ENCODE measurements at regions of chrX and their contacts with region 1.

Region 1: DNA sequence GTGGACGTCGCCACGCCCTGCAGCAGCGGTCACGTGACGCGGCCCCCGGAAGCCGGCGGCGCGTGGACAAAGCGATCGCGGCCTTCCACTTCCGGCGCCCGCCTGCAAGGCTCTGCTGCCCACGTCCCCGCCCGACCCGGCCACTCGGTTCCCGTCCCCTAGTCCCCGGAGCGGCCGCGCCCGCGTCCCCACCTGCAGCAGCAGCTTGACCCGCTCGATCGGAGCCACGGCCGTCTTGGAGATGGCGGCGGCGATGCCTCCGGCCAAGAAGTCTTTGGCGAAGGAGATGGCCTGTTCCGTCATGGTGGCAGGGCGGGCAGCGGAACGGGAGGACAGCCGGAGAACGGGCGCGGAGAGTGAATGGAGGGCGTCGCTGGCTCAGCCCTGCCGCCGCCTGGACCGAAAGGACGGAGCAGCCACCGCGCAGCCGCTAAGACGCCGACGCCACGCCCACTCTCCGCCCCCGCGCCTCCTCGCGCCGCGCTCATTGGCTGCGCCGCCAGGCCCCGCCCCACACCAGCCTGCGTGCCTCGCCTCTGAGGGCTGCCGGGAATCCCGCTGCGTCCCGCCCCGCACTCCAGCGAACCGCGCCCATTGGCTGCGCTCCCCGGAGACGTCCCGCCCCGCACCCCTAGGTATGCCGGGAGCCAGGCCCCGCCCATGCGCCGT is at the start of gene SLC25A6:
- DNase-seq: peak; percentile 100
- H3K4me3 Mint-ChIP-seq: peak within 1 kb of the TSS; percentile 84
- H3K27ac Mint-ChIP-seq: peak within 1 kb of the TSS; percentile 96
- H3K4me1 Mint-ChIP-seq: peaks cover 57% of the 10 kb centered on the region
- H3K27me3 Mint-ChIP-seq: no peaks in the 10 kb centered on the region
- total RNA-seq, gene SLC25A6: 399 to 407 TPM

Region 2: GRCh38 chrX:318739-319578 is 1072.9 kb before region 1 on chrX and contains the start of gene GTPBP6:
- CTCF ChIA-PET with region 1: no interaction called
- POLR2A ChIA-PET with region 1: no interaction called
- intact Hi-C with region 1: loop called (anchors 2 kb)
- DNase-seq: peak; percentile 99
- H3K4me3 Mint-ChIP-seq: peak within 1 kb of the TSS; percentile 91
- H3K27ac Mint-ChIP-seq: peak within 1 kb of the TSS; percentile 99
- H3K4me1 Mint-ChIP-seq: peaks cover 23% of the 10 kb centered on the region
- H3K27me3 Mint-ChIP-seq: no peaks in the 10 kb centered on the region
- total RNA-seq, gene GTPBP6: 60.0 to 62.4 TPM

Region 3: DNA sequence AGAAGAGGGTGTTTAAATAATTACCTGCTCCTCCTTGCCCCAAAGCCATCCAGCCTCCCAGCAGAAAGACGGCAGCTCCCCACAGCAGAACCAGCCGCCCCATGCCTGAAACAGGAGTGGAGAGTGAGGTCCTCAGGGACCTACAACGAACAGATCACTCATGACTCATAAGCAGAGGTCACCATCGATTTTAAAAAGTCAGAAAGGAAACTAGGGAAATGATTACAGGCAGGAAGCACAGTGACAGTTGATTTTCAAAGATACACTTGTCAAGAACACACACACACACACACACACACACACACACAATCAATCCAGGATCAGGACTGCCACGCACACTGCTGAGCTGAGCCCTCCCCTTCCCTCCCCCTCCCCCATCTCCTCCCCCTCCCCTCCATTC is 179.3 kb before region 1 on chrX and contains the start of gene CRLF2:
- CTCF ChIA-PET with region 1: no interaction called
- POLR2A ChIA-PET with region 1: no interaction called
- intact Hi-C with region 1: loop called (anchors 2 kb)
- DNase-seq: peak; percentile 61
- H3K4me3 Mint-ChIP-seq: peak within 1 kb of the TSS; percentile 61
- H3K27ac Mint-ChIP-seq: peak within 1 kb of the TSS; percentile 81
- H3K4me1 Mint-ChIP-seq: peaks cover 37% of the 10 kb centered on the region
- H3K27me3 Mint-ChIP-seq: peaks cover 8% of the 10 kb centered on the region
- total RNA-seq, gene CRLF2: 0.44 to 1.3 TPM

Region 4: DNA sequence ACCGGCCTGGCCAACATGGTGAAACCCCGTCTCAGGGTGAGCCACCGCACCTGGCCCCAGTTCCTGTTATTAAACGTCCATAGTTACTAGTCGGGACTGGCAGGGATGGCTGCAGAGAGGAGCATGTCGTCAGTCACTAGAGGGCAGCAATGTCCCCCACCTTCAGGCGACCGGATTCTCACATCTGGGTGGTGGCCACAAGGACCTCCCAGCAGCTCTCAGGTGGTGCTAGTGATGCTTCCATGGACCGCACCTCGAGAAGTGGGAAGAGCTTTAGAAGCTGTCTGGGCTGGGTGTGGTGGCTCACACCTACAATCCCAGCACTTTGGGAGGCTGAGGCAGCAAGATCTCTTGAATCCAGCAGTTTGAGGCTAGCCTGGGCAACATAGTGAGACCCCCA is 68.5 kb before region 1 on chrX:
- CTCF ChIA-PET with region 1: no interaction called
- POLR2A ChIA-PET with region 1: no interaction called
- intact Hi-C with region 1: loop called (anchors 2 kb)
- DNase-seq: peak; percentile 82
- H3K4me3 Mint-ChIP-seq: no peak overlapping the region
- H3K27ac Mint-ChIP-seq: peak overlapping the region; percentile 9
- H3K4me1 Mint-ChIP-seq: peaks cover 15% of the 10 kb centered on the region
- H3K27me3 Mint-ChIP-seq: peaks cover 11% of the 10 kb centered on the region

Region 5: GRCh38 chrX:1420371-1420770 is 28.5 kb after region 1 on chrX:
- CTCF ChIA-PET with region 1: no interaction called
- POLR2A ChIA-PET with region 1: no interaction called
- intact Hi-C with region 1: no loop called
- DNase-seq: no peak
- H3K4me3 Mint-ChIP-seq: no peak overlapping the region
- H3K27ac Mint-ChIP-seq: peak overlapping the region; percentile 18
- H3K4me1 Mint-ChIP-seq: no peaks in the 10 kb centered on the region
- H3K27me3 Mint-ChIP-seq: no peaks in the 10 kb centered on the region

Region 6: DNA sequence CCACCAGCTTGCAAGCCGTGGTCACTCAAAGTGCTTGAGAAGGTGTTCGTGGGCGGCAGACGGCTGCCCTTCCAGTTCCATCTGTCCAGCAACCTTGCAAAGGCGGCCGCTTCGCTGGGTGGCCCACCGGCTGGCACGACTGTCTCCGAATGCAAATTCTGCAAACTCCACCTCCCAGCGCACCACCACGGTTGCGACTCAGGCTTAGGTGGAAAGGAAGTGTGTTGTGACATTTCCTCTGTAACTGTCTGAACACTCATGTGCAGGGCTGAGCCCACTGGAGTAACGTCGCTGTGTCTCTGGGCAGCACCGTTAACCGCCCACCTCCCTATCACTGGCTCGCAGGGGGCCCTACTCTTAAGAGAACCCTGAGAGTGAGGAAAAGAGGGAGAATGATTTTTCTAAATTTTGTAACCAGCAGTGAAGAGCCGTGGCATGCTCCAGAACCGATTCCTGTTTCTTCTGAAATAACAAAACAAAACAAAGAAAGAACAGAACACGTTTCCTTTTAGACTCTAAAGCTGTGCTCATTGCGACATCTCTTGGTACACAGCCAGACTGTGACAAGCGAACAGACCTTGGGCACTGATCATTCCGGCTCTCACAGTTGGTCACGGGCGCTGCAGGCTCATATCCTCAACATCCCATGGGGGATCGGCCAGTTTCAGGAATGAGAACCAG is 145.3 kb after region 1 on chrX and contains the start of gene P2RY8:
- CTCF ChIA-PET with region 1: no interaction called
- POLR2A ChIA-PET with region 1: no interaction called
- intact Hi-C with region 1: loop called (anchors 5 kb)
- DNase-seq: peak; percentile 90
- H3K4me3 Mint-ChIP-seq: peak within 1 kb of the TSS; percentile 94
- H3K27ac Mint-ChIP-seq: peak within 1 kb of the TSS; percentile 99
- H3K4me1 Mint-ChIP-seq: peaks cover 15% of the 10 kb centered on the region
- H3K27me3 Mint-ChIP-seq: no peaks in the 10 kb centered on the region
- total RNA-seq, gene P2RY8: 30.2 to 32.7 TPM

Region 7: GRCh38 chrX:1591102-1591900 is 199.5 kb after region 1 on chrX and contains the start of gene AKAP17A:
- CTCF ChIA-PET with region 1: no interaction called
- POLR2A ChIA-PET with region 1: no interaction called
- intact Hi-C with region 1: loop called (anchors 1 kb)
- DNase-seq: peak; percentile 99
- H3K4me3 Mint-ChIP-seq: peak within 1 kb of the TSS; percentile 92
- H3K27ac Mint-ChIP-seq: peak within 1 kb of the TSS; percentile 89
- H3K4me1 Mint-ChIP-seq: peaks cover 31% of the 10 kb centered on the region
- H3K27me3 Mint-ChIP-seq: no peaks in the 10 kb centered on the region
- total RNA-seq, gene AKAP17A: 59.4 to 62.9 TPM